ENCODE measurements at regions of chr6 and their contacts with region 1.

Region 1: GRCh38 chr6:132962936-132963868 is 148.8 kb downstream of the RPS12 start:
- DNase-seq: peak; percentile 56 to 62
- ATAC-seq: peak in 7 of 8 donors; percentile 49 to 91 (median 86)
- H3K4me3 ChIP-seq: no peak overlapping the region
- H3K27ac ChIP-seq: peak overlapping the region in 1 of 10 donors; percentile 2
- H3K4me1 ChIP-seq: peaks cover 0 to 26% (median 10%) of the 10 kb centered on the region in 9 donors
- H3K27me3 ChIP-seq: no peaks in the 10 kb centered on the region
- CTCF ChIP-seq: peak; percentile 38 to 74 (median 64)

Region 2: GRCh38 chr6:133040094-133040802 is 77.0 kb after region 1 on chr6:
- intact Hi-C with region 1: loop called in 1 of 10 experiments (anchors 5 kb)
- DNase-seq: no peak
- ATAC-seq: peak in 2 of 8 donors; percentile 31 to 33
- H3K4me3 ChIP-seq: no peak overlapping the region
- H3K27ac ChIP-seq: peak overlapping the region in 4 of 10 donors; percentile 21 to 65 (median 56)
- H3K4me1 ChIP-seq: peaks cover 0 to 19% (median 0%) of the 10 kb centered on the region in 9 donors
- H3K27me3 ChIP-seq: no peaks in the 10 kb centered on the region
- CTCF ChIP-seq: peak in 7 of 9 donors; percentile 28 to 54 (median 39)

Region 3: DNA sequence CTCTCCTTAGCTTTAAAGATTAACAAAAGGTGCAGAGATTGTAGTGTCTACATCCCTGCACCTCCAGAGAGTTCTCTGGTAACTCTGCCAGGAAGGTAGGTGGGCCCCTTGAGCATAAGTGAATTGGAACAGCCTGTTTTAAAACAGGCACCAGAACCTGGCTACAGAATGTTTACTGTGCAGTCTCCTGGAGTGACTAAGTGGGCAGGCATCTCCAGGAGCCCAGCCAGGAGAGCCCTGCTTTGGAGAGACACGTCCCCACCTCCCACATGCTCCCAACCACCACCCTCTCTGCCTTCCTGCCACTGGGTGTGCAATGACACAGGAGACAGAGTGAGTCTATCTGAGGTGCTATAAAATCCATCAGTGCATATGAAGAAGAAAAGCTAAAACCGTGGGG is 167.7 kb after region 1 on chr6:
- intact Hi-C with region 1: loop called in 1 of 10 experiments (anchors 10 kb)
- DNase-seq: peak; percentile 66 to 78
- ATAC-seq: peak; percentile 93 to 99 (median 98)
- H3K4me3 ChIP-seq: no peak overlapping the region
- H3K27ac ChIP-seq: peak overlapping the region in 8 of 10 donors; percentile 51 to 83 (median 69)
- H3K4me1 ChIP-seq: peaks cover 0 to 40% (median 7%) of the 10 kb centered on the region in 9 donors
- H3K27me3 ChIP-seq: no peaks in the 10 kb centered on the region
- CTCF ChIP-seq: peak in 3 of 9 donors; percentile 41 to 51 (median 44)

Region 4: GRCh38 chr6:133179481-133179880 is 216.3 kb after region 1 on chr6:
- intact Hi-C with region 1: loop called in 3 of 10 experiments (anchors 10 kb)
- DNase-seq: no peak
- ATAC-seq: no peak
- H3K4me3 ChIP-seq: no peak overlapping the region
- H3K27ac ChIP-seq: no peak overlapping the region
- H3K4me1 ChIP-seq: no peaks in the 10 kb centered on the region
- H3K27me3 ChIP-seq: no peaks in the 10 kb centered on the region
- CTCF ChIP-seq: no peak

Region 5: GRCh38 chr6:133198725-133199124 is 235.5 kb after region 1 on chr6:
- intact Hi-C with region 1: loop called in 1 of 10 experiments (anchors 10 kb)
- DNase-seq: no peak
- ATAC-seq: no peak
- H3K4me3 ChIP-seq: no peak overlapping the region
- H3K27ac ChIP-seq: no peak overlapping the region
- H3K4me1 ChIP-seq: no peaks in the 10 kb centered on the region
- H3K27me3 ChIP-seq: no peaks in the 10 kb centered on the region
- CTCF ChIP-seq: no peak

Region 6: GRCh38 chr6:133502441-133503259 is 539.4 kb after region 1 on chr6:
- intact Hi-C with region 1: loop called in 2 of 10 experiments (anchors 10 kb)
- DNase-seq: no peak
- ATAC-seq: peak; percentile 46 to 77 (median 66)
- H3K4me3 ChIP-seq: no peak overlapping the region
- H3K27ac ChIP-seq: peak overlapping the region in 8 of 10 donors; percentile 36 to 67 (median 55)
- H3K4me1 ChIP-seq: peaks cover 4 to 52% (median 30%) of the 10 kb centered on the region in 9 donors
- H3K27me3 ChIP-seq: no peaks in the 10 kb centered on the region
- CTCF ChIP-seq: no peak

Region 7: DNA sequence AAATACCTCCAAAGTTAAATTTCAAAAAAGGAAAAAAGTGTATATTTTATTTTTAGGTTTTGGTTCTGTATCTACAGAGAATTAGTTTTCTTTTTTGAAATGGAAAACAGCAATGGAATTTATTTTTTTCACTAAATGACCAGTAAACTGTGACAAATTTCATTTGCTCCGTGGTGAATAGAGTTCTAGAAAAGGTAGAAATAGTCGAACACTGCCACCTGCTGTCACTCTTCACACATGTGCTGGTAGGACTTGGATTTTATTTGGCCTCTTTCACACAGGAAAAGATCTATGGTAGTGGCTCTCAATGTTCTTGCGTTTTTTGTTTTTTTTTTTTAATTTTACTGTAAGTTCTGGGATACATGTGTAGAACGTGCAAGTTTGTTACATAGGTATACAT is 590.5 kb after region 1 on chr6:
- intact Hi-C with region 1: loop called in 3 of 10 experiments (anchors 5 to 10 kb)
- DNase-seq: peak in 1 of 2 donors; percentile 47
- ATAC-seq: peak in 6 of 8 donors; percentile 49 to 75 (median 66)
- H3K4me3 ChIP-seq: no peak overlapping the region
- H3K27ac ChIP-seq: no peak overlapping the region
- H3K4me1 ChIP-seq: peaks cover 0 to 21% (median 6%) of the 10 kb centered on the region in 9 donors
- H3K27me3 ChIP-seq: no peaks in the 10 kb centered on the region
- CTCF ChIP-seq: peak; percentile 16 to 71 (median 59)

Measured in heart right ventricle (tissue), 16 donors.